Activated CD4-positive, alpha-beta T cell treated with anti-CD3 and anti-CD28 coated beads, Interleukin-2, amount 10 ng/mL, durations not matched to agents 7 days and 5 days (primary cell): ENCODE measurements at regions of chr11 and their contacts with region 1.

Region 1: GRCh38 chr11:9757809-9758636 is 94.1 kb downstream of the SWAP70 start:
- DNase-seq: peak; percentile 91
- H3K4me3 Mint-ChIP-seq: peak overlapping the region; percentile 71
- H3K27ac Mint-ChIP-seq: peak overlapping the region; percentile 85
- H3K4me1 Mint-ChIP-seq: peaks cover 40% of the 10 kb centered on the region
- H3K27me3 Mint-ChIP-seq: no peaks in the 10 kb centered on the region

Region 2: GRCh38 chr11:9884601-9885000 is 126.6 kb after region 1 on chr11:
- CTCF ChIA-PET with region 1: no interaction called
- POLR2A ChIA-PET with region 1: no interaction called
- DNase-seq: no peak
- H3K4me3 Mint-ChIP-seq: no peak overlapping the region
- H3K27ac Mint-ChIP-seq: no peak overlapping the region
- H3K4me1 Mint-ChIP-seq: no peaks in the 10 kb centered on the region
- H3K27me3 Mint-ChIP-seq: no peaks in the 10 kb centered on the region

Region 3: DNA sequence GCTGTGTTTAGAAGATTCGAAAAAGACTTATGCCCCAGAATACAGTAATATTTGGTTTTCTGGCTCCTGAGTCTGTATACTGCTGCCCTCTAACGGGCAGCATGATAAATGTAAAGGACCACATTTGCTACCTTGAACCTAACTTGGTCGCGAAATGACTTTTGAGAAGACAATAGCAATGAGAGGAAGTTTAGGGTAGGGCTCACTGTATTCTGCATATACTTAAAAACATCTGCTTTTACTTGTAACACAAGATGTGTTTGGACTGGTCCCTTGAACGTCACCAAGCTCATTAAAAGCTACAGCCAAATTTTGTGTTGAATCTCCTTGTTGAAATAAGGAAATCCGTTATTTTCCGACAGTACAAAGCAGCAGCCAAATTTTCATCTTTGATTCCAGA is 215.0 kb after region 1 on chr11:
- CTCF ChIA-PET with region 1: interaction called, 18 read pairs
- POLR2A ChIA-PET with region 1: no interaction called
- DNase-seq: peak; percentile 44
- H3K4me3 Mint-ChIP-seq: no peak overlapping the region
- H3K27ac Mint-ChIP-seq: no peak overlapping the region
- H3K4me1 Mint-ChIP-seq: peaks cover 5% of the 10 kb centered on the region
- H3K27me3 Mint-ChIP-seq: no peaks in the 10 kb centered on the region

Region 4: DNA sequence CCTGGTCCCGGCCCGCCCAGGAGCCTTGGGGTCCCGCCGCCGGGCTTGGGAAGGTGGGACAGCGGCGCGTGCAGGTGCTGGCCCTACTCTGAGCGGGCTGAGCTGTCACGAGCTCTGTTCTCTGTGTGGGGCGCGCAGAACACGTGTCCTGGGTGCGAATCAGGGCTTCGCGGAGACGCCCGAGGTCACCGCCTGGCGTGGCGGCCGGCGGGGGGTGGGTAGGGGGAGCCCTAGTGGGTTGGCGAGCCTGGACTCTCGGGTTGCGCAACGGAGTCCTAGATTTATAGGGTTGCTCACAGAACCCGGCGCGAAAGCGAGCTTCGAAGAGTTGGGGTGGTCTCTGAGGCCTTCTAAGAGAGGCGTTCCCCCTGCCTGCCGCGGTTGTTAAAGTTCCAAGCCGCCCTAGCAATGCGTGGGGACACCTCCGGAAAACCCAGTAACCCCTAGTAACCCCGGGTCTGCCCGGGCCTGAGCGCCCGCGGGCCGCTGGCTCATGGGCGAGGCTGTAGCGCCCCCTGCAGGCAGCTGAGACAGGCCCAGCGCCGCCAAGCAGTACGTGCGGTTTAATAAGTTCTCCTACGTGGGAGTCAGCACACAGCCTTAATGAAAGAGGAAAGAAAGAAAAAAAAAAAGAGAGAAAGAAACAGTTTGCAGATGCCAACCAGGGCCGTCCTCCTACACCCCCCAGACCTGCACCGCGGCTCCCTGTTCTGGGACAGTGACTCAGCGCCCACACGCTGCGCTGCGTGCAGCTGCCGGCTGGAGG is 549.6 kb after region 1 on chr11:
- CTCF ChIA-PET with region 1: interaction called, 29 read pairs
- POLR2A ChIA-PET with region 1: no interaction called
- DNase-seq: peak; percentile 75
- H3K4me3 Mint-ChIP-seq: peak overlapping the region; percentile 74
- H3K27ac Mint-ChIP-seq: peak overlapping the region; percentile 50
- H3K4me1 Mint-ChIP-seq: peaks cover 56% of the 10 kb centered on the region
- H3K27me3 Mint-ChIP-seq: peaks cover 82% of the 10 kb centered on the region